SK-N-SH (cell line): ENCODE measurements at regions of chr1 and their contacts with region 1.

Region 1: DNA sequence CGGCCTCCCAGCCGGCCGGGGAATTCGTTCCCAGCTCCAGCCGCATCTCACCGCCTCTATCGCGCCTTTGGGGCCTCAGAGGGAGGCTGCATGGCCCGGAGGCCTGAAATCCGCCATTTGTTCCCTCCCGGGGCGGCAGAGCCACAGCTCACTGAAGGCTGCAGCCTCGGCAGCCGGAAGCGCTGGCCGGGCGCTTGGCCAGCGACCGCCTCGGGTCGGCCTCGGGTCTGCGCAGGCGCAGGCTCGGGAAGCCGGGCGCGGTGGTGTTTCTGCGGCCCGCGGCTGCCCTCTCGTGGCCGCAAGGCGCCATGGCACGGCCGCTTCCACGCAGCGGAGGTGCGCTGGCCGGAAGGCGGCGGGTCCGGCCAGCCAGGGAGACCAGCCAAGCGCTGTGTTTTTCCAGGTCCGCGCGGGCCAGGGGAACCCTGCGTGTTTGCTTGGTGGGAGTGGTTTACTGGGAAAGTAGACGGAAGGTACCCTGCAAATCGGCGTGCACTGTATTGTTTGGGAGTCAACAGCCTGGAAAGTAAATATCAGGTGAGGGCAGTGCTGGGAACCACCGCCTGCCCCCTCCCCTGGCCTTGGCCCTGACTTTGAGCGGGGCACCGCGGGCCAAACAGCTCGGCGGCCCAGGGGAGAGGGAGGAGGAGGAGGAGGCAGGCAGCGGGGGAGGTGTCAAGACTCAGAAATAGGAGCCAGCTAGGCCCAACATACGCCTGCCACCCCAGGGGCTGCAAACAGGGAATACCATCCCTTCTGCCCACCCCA is 52.7 kb upstream of the CD34 start:
- DNase-seq: peak; percentile 100
- H3K4me3 ChIP-seq: peak overlapping the region; percentile 54 to 55; a peak in 3 of 4 replicates
- H3K27ac ChIP-seq: peak overlapping the region; percentile 37 to 93; a peak in 3 of 4 replicates
- H3K4me1 ChIP-seq: peaks cover 0 to 15% of the 10 kb centered on the region in 2 experiments; a peak in 3 of 4 replicates
- H3K27me3 ChIP-seq: no peaks in the 10 kb centered on the region
- CTCF ChIP-seq: peak; percentile 95
- EP300 ChIP-seq: peak in 1 of 2 experiments; percentile 15; a peak in 1 of 4 replicates
- RAD21 ChIP-seq: peak; percentile 98

Region 2: GRCh38 chr1:207897188-207897587 is 66.4 kb before region 1 on chr1:
- CTCF ChIA-PET with region 1: interaction called, 102 read pairs
- POLR2A ChIA-PET with region 1: interaction called, 6 read pairs
- DNase-seq: peak; percentile 48
- H3K4me3 ChIP-seq: no peak overlapping the region
- H3K27ac ChIP-seq: no peak overlapping the region
- H3K4me1 ChIP-seq: no peaks in the 10 kb centered on the region
- H3K27me3 ChIP-seq: no peaks in the 10 kb centered on the region
- CTCF ChIP-seq: peak; percentile 49
- EP300 ChIP-seq: no peak
- RAD21 ChIP-seq: peak; percentile 61

Region 3: DNA sequence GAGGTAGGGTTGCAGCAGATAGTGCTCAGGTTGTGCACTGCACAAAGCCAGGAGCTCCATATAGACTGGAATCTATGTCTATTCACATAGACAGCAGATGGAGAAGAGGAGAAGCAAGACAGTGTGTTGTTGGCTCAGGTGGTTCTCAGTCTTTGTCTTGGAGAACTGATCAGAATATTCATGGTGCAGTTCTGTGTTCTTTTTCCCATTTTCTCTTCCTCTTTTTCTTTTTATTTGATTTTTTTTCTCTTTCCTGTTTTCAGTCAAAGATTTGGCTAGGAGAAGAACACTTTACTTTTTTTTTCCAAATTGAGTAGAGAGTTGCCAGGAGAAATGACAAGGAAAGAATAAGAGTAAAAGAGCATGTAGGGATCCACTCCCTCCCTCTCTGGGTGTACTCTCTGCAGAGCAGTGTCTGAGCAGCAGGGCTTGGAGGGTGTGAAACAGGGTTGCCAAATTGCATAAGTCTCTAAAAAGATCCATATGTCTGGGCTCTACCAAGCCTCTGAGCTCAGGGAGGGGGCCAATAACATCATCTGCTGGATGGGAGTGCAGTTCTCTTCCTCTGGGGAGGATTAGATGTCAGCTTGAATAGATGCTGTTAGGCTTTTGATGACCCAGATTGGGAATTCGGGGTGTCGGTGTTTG is 44.0 kb before region 1 on chr1:
- CTCF ChIA-PET with region 1: interaction called, 18 read pairs
- POLR2A ChIA-PET with region 1: interaction called, 4 read pairs
- DNase-seq: no peak
- H3K4me3 ChIP-seq: no peak overlapping the region
- H3K27ac ChIP-seq: no peak overlapping the region
- H3K4me1 ChIP-seq: peaks cover 0 to 7% of the 10 kb centered on the region in 2 experiments; a peak in 1 of 4 replicates
- H3K27me3 ChIP-seq: peaks cover 12% of the 10 kb centered on the region
- CTCF ChIP-seq: no peak
- EP300 ChIP-seq: no peak
- RAD21 ChIP-seq: no peak

Region 4: GRCh38 chr1:207944571-207944970 is 19.0 kb before region 1 on chr1:
- CTCF ChIA-PET with region 1: interaction called, 38 read pairs
- POLR2A ChIA-PET with region 1: no interaction called
- DNase-seq: no peak
- H3K4me3 ChIP-seq: no peak overlapping the region
- H3K27ac ChIP-seq: peak overlapping the region in 1 of 2 experiments; percentile 18; a peak in 1 of 4 replicates
- H3K4me1 ChIP-seq: peaks cover 0 to 4% of the 10 kb centered on the region in 2 experiments; a peak in 2 of 4 replicates
- H3K27me3 ChIP-seq: no peaks in the 10 kb centered on the region
- CTCF ChIP-seq: no peak
- EP300 ChIP-seq: 0 out of 4 replicates have a peak, but pooled peaks of 1 of the 2 experiments have one; percentile 7
- RAD21 ChIP-seq: no peak

Region 5: DNA sequence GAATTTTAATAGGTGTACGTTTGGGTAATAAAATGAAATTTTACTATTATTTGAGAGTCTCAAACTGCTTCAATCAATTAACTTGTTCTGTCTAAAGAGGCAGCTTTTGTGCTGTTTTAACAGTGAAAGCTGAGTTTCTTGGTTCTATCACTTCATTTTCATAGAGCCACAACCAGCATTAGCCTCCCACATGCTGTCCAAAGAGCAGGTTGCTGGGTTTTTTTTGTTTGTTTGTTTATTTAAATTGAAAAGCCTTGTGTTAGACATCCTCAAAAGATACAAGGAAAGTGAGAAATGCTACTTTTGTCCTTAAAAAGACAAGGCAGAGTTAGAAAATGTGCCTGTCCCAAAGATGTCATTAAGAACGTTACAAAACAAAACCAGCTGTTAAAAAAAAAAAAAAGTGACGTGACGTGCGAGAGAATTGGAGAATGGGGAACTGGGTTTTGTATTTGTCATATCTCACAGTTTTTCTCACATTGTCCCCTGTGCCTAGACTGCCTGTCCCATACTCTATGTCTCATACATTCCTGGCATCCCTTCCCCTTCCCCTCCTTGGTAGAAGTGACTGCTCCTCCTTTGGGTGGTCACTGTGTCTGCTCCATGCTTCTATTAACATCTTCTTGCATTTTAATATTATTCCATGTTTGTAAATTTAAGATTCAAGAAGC is 10.4 kb after region 1 on chr1:
- CTCF ChIA-PET with region 1: interaction called, 14 read pairs
- POLR2A ChIA-PET with region 1: no interaction called
- DNase-seq: no peak
- H3K4me3 ChIP-seq: no peak overlapping the region
- H3K27ac ChIP-seq: no peak overlapping the region
- H3K4me1 ChIP-seq: no peaks in the 10 kb centered on the region; a peak in 1 of 4 replicates
- H3K27me3 ChIP-seq: no peaks in the 10 kb centered on the region
- CTCF ChIP-seq: no peak
- EP300 ChIP-seq: no peak
- RAD21 ChIP-seq: no peak

Region 6: DNA sequence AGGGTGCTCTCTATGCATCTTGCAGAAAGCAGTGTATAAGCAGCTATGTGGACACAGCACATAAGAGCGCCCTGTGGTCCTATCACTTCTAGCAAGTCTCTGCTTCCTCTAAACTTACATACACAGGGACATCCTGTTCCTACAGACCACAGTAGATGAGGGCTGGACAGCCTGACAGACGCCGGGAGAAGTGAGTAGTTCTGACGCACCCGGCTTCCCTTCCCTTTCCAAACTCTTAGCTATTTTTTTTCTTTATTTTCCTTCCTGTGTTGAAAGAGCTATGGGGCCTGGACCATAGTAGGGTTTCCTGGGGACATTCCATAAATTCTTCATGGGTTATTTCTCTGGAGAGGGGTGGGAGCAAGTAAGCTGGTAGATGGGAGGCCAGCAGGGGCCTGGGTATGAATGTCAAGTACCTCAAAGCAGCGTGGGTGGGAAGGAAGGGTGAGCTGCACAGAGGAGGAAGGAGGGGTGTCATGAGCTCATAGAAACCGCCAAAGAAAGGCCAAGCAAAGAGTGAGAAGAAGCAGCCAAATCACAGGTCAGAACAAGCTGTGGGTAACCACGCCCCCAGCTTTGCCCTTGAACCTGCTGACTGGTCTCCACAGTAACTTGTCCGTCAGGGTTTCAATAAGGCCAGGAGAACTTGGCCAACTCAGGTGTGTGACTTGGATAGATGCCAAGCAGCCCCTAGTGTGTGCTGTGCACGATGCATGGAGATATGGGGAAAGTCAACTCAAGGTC is 243.9 kb after region 1 on chr1:
- CTCF ChIA-PET with region 1: no interaction called
- POLR2A ChIA-PET with region 1: no interaction called
- DNase-seq: no peak
- H3K4me3 ChIP-seq: no peak overlapping the region
- H3K27ac ChIP-seq: peak overlapping the region; percentile 30 to 83; a peak in 3 of 4 replicates
- H3K4me1 ChIP-seq: peaks cover 21 to 33% of the 10 kb centered on the region in 2 experiments
- H3K27me3 ChIP-seq: no peaks in the 10 kb centered on the region
- CTCF ChIP-seq: no peak; the same call in 1 of the 2 replicates
- EP300 ChIP-seq: peak in 1 of 2 experiments; percentile 65; a peak in 1 of 4 replicates
- RAD21 ChIP-seq: no peak

Region 7: GRCh38 chr1:208231929-208232661 is 268.5 kb after region 1 on chr1:
- CTCF ChIA-PET with region 1: no interaction called
- POLR2A ChIA-PET with region 1: no interaction called
- DNase-seq: peak; percentile 58
- H3K4me3 ChIP-seq: no peak overlapping the region
- H3K27ac ChIP-seq: peak overlapping the region; percentile 67 to 74
- H3K4me1 ChIP-seq: peaks cover 30 to 38% of the 10 kb centered on the region in 2 experiments
- H3K27me3 ChIP-seq: no peaks in the 10 kb centered on the region
- CTCF ChIP-seq: no peak
- EP300 ChIP-seq: 0 out of 4 replicates have a peak, but pooled peaks of 1 of the 2 experiments have one; percentile 61
- RAD21 ChIP-seq: no peak